Astrocyte of the cerebellum (primary cell): ENCODE measurements at regions of chr17 and their contacts with region 1.

Region 1: DNA sequence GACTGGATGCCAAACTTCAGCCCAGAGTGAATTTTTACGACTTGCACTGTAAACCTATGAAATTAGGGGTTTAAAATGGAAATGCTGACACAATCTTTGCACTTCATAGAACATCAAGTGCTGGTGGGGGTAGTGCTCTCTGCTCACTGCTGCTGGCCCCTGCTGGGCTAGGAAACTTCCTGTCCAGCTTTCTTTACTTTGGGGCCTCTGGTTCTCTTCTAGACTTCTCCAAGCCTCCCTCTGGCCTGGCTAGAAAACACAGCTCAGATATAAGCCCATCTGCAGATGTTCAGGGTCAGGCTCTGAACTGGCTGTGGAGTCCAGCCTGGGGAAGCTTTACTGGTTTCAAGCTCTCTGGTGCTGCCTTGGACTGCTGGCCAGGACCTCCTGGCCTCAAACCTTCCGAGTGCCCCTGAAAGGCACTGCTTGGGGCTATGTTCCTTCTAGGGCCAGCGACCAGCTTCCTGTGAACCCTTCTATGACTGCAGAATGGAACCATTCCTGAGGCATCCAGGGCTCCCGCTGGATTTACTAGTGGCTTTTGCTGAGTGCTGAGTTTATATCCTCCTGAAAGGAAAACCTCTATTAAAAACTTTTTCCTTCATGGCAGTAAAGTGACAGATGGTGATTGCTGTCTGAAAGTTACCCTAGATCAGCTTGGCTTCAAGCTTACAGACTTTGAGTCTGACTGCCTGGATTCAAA is 59.4 kb downstream of the TBX4 start:
- DNase-seq: no peak
- H3K4me3 ChIP-seq: no peak overlapping the region
- CTCF ChIP-seq: no peak

Region 2: DNA sequence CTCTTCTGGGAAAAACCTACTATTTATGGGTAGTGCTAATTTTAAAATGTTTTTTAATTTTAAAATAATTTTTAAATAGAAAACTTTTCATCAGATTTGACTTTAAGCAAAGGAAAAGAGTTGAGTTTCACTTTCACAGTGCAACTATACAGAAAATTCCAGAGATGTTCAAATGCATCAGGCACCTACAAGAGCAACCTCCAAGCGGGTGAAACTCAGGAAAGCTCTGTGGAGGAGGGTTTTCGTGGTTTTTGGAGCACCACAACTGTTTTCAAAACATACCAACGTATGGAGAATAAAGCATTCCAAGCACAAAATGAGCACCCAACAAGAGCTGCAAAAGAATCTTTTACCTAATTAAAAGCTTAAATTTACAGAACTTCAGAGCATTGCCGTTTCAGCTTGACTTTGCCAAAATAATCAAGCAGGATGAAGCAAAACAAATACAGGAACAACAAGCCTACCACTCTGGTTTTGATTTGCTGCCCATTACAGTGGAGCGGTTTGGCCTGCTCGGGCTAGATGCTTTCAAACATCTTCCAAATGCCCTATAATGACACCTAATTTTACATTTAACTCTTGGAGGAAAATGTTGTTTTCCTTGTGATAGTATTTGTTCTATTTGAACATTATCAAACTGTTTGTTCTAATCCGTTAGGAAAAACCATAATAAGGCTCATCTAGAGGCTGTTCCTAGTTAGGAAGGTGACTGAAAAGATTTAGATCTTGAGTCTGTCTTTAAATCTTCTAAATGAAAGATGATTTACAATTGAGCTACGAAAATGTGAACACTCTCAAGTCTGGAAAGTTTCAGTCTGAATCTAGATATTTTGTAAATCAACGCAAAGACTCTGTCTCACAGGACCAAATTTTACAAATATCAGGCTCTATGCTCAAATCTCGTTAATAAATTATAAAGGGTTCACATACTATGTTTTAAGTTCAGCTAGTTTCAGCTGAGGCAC is 44.9 kb after region 1 on chr17:
- in situ Hi-C with region 1: loop called (anchors 5 kb)
- DNase-seq: peak; percentile 49
- H3K4me3 ChIP-seq: no peak overlapping the region
- CTCF ChIP-seq: no peak

Region 3: DNA sequence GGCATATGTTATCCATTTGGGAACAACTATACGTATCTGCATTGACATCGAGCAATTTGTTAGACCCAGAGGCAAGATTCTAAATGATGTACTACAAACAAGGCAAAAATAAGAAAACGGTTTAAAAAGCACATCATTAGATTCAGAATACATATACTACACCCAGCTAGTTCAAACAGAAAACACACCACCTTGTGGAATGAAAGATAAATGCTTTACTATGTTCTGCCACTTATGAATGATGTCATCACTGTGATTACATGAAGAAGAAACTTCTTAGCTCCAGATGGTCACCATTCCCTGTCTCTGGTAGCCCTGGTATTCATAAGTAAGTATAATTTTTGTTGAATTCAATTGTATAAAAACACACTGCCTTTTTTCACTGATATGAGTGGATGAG is 71.6 kb after region 1 on chr17:
- in situ Hi-C with region 1: no loop called
- DNase-seq: peak; percentile 40
- H3K4me3 ChIP-seq: no peak overlapping the region
- CTCF ChIP-seq: peak; percentile 31